IMR-90 (cell line): ENCODE measurements at regions of chr15 and their contacts with region 1.

Region 1: GRCh38 chr15:62824111-62825015 is 218.2 kb upstream of the TPM1 start:
- DNase-seq: peak; percentile 86
- ATAC-seq: peak; percentile 89
- H3K4me3 ChIP-seq: no peak overlapping the region
- H3K27ac ChIP-seq: no peak overlapping the region
- H3K4me1 ChIP-seq: peaks cover 13% of the 10 kb centered on the region
- H3K27me3 ChIP-seq: no peaks in the 10 kb centered on the region
- CTCF ChIP-seq: no peak
- POLR2A ChIP-seq: no peak
- RAD21 ChIP-seq: no peak

Region 2: GRCh38 chr15:62254137-62254934 is 570.0 kb before region 1 on chr15:
- CTCF ChIA-PET with region 1: no interaction called
- POLR2A ChIA-PET with region 1: no interaction called
- dilution Hi-C with region 1: no loop called
- in situ Hi-C with region 1: no loop called
- intact Hi-C with region 1: no loop called
- DNase-seq: peak; percentile 43
- ATAC-seq: peak; percentile 81
- H3K4me3 ChIP-seq: no peak overlapping the region
- H3K27ac ChIP-seq: no peak overlapping the region
- H3K4me1 ChIP-seq: no peaks in the 10 kb centered on the region
- H3K27me3 ChIP-seq: peaks cover 22% of the 10 kb centered on the region
- CTCF ChIP-seq: peak; percentile 62
- POLR2A ChIP-seq: no peak
- RAD21 ChIP-seq: peak; percentile 56

Region 3: DNA sequence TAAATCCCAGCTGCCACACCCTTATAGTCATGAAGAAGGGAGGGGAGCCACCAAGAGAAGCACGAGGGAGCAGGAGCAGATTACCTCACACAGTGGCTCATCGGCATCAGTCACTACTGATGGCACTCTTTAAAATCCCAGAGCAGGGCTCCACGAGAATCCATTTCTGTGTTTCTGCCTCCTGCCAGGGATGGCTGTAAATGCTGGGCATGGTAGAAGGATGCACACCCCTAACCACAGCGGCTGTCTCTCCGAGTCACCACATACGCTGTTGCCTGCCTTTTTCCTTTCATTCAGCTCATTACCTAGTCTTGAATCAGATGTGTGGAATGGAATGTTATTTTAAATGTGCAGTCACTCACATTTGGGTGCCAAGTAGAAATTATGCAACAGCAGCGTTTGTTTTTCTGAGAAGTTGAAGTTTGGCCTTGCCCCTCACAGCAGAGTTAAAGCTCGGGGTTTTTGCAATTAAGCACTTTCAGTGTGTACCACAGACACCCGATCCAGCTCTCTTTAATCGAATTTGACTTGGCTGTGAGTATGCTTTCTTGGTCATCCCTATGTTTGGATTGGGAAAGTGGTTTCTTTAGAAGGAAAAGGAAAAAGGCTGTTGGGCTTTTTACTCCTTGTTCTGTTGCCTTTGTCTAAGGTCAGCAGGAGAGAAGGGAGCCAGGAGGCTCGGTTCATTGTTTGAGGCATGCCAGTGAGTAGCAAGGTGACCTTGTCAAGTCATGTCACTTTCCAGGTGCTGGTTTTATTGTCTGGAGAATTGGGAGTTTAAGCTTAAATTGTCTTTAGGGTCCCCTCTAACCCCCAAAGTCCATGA is 66.0 kb before region 1 on chr15:
- CTCF ChIA-PET with region 1: no interaction called
- POLR2A ChIA-PET with region 1: no interaction called
- dilution Hi-C with region 1: no loop called
- in situ Hi-C with region 1: no loop called
- intact Hi-C with region 1: no loop called
- DNase-seq: peak; percentile 90
- ATAC-seq: peak; percentile 94
- H3K4me3 ChIP-seq: no peak overlapping the region
- H3K27ac ChIP-seq: peak overlapping the region; percentile 45; the same call in 1 of the 2 replicates
- H3K4me1 ChIP-seq: peaks cover 10% of the 10 kb centered on the region
- H3K27me3 ChIP-seq: no peaks in the 10 kb centered on the region
- CTCF ChIP-seq: no peak
- POLR2A ChIP-seq: 0 out of 2 replicates have a peak, but pooled peaks have one; percentile 32
- RAD21 ChIP-seq: no peak

Region 4: GRCh38 chr15:62880278-62880677 is 55.9 kb after region 1 on chr15:
- CTCF ChIA-PET with region 1: no interaction called
- POLR2A ChIA-PET with region 1: no interaction called
- dilution Hi-C with region 1: no loop called
- in situ Hi-C with region 1: no loop called
- intact Hi-C with region 1: loop called (anchors 5 kb)
- DNase-seq: peak; percentile 37
- ATAC-seq: no peak
- H3K4me3 ChIP-seq: no peak overlapping the region
- H3K27ac ChIP-seq: no peak overlapping the region
- H3K4me1 ChIP-seq: peaks cover 7% of the 10 kb centered on the region
- H3K27me3 ChIP-seq: no peaks in the 10 kb centered on the region
- CTCF ChIP-seq: no peak
- POLR2A ChIP-seq: no peak
- RAD21 ChIP-seq: no peak